A673 (cell line): ENCODE measurements at regions of chr10 and their contacts with region 1.

Region 1: GRCh38 chr10:24360282-24361127 is 151.6 kb downstream of the KIAA1217 start:
- DNase-seq: peak; percentile 90
- H3K4me3 ChIP-seq: no peak overlapping the region
- H3K27ac ChIP-seq: peak overlapping the region; percentile 8
- H3K4me1 ChIP-seq: peaks cover 63% of the 10 kb centered on the region
- H3K27me3 ChIP-seq: no peaks in the 10 kb centered on the region
- CTCF ChIP-seq: peak; percentile 87

Region 2: GRCh38 chr10:24118246-24118645 is 242.3 kb before region 1 on chr10:
- CTCF ChIA-PET with region 1: no interaction called
- POLR2A ChIA-PET with region 1: no interaction called
- intact Hi-C with region 1: loop called (anchors 10 kb)
- DNase-seq: peak; percentile 97
- H3K4me3 ChIP-seq: peak overlapping the region; percentile 38
- H3K27ac ChIP-seq: peak overlapping the region; percentile 81
- H3K4me1 ChIP-seq: peaks cover 60% of the 10 kb centered on the region
- H3K27me3 ChIP-seq: no peaks in the 10 kb centered on the region
- CTCF ChIP-seq: no peak

Region 3: DNA sequence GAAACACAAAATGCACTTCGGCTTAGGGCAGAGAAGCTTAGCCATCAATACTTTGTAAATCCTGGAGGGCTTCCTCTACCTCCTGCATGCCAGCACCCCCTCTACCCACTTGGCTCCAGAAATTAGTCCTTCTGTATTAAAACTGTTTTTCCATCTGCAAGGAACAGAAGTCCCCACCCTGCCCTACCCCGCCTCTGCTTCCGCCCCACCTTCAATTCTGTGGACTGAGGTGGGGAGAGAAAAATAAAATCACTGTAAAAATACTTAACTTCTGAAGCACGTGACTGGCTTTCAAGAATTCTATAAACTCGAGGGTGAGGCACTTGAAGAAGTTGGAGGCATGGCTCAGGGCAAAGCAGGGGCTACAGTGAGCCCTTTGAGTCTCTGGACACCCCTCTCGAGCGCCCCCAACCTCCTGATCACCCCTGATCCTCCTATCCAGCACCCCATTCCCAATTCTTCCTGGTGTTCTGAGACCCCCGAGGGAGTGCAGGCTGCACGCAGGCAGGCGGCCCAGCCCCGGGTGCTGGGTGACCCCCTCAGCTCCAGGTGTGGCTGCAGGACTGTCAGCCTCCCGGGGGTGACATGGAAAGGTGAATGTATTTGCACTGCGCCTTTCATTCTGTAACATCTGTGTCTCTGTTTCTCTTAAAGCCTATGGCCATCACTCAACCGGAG is 158.9 kb before region 1 on chr10:
- CTCF ChIA-PET with region 1: no interaction called
- POLR2A ChIA-PET with region 1: no interaction called
- intact Hi-C with region 1: loop called (anchors 5 kb)
- DNase-seq: no peak
- H3K4me3 ChIP-seq: no peak overlapping the region
- H3K27ac ChIP-seq: no peak overlapping the region
- H3K4me1 ChIP-seq: peaks cover 27% of the 10 kb centered on the region
- H3K27me3 ChIP-seq: no peaks in the 10 kb centered on the region
- CTCF ChIP-seq: no peak

Region 4: GRCh38 chr10:24287559-24288195 is 72.8 kb before region 1 on chr10:
- CTCF ChIA-PET with region 1: no interaction called
- POLR2A ChIA-PET with region 1: no interaction called
- intact Hi-C with region 1: no loop called
- DNase-seq: peak; percentile 23
- H3K4me3 ChIP-seq: no peak overlapping the region
- H3K27ac ChIP-seq: no peak overlapping the region
- H3K4me1 ChIP-seq: peaks cover 20% of the 10 kb centered on the region
- H3K27me3 ChIP-seq: no peaks in the 10 kb centered on the region
- CTCF ChIP-seq: 0 out of 2 replicates have a peak, but pooled peaks have one; percentile 21

Region 5: DNA sequence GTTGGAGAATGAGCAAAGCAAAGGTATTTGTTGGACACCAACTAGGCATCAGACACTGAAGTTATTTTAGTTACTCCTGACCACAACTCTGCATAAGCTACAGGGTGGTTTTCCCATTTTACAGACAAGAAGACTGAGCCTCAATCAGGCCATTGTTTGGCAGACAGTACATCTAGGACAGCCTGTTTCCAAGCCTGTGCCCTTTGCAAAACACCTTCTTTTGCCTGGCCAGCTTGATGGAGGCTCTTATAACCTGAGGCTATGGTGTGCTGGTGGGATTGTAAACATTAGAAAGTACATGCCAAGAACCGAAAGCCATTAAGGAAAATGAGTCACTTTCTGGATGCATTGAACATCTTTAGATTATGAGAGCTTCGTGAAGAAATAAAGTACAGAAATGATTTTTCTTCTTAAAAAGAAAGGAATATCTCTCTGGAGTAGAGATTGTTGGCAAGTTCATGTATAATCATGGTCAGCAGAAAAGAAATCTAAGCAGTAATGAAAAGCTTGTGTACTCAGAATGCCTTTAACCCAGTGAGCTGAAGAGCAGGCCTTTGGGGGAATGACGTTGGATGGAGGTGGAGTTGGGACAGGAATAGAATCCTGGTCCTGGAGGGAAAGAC is 11.0 kb before region 1 on chr10:
- CTCF ChIA-PET with region 1: no interaction called
- POLR2A ChIA-PET with region 1: interaction called, 14 read pairs
- intact Hi-C with region 1: no loop called
- DNase-seq: no peak
- H3K4me3 ChIP-seq: no peak overlapping the region
- H3K27ac ChIP-seq: peak overlapping the region; percentile 86
- H3K4me1 ChIP-seq: peaks cover 83% of the 10 kb centered on the region
- H3K27me3 ChIP-seq: no peaks in the 10 kb centered on the region
- CTCF ChIP-seq: no peak

Region 6: DNA sequence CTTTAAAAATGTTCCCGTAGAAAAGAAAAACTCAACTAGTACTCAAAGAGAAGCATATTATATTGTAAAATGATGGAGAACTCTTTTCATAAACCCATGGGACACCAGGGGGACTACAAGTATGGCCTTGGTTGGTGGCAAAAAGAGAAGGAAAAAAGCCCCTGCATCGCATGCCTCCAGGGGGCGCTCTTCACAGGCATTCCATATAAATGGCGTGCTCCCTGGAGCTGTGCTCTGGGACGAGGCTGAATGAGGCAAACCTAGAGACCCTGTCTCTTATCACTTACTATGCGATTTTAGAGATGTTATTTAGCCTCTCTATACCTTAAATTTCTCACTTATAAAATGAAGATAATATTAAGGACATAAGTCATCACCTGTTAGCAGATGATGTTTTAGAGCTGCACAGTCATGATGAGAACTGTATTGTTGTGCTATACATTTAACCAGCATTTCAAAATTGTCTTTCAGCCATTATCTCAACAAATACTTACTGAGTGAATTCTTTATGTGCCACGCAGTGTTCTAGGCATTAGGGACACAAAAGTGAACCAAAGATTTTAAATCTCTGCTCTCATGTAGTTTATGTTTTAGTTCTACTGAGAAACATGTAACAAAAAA is 257.4 kb after region 1 on chr10:
- CTCF ChIA-PET with region 1: no interaction called
- POLR2A ChIA-PET with region 1: no interaction called
- intact Hi-C with region 1: no loop called
- DNase-seq: peak; percentile 74
- H3K4me3 ChIP-seq: no peak overlapping the region
- H3K27ac ChIP-seq: no peak overlapping the region
- H3K4me1 ChIP-seq: peaks cover 4% of the 10 kb centered on the region
- H3K27me3 ChIP-seq: no peaks in the 10 kb centered on the region
- CTCF ChIP-seq: peak; percentile 88